Body of pancreas (tissue), 4 donors: ENCODE measurements at regions of chr14 and their contacts with region 1.

Region 1: GRCh38 chr14:93115069-93115820 is 480 bp downstream of the ITPK1 start:
- DNase-seq: peak; percentile 88 to 91 (median 90)
- ATAC-seq: peak; percentile 88
- H3K4me3 ChIP-seq: peak overlapping the region; percentile 64 to 76
- H3K27ac ChIP-seq: peak overlapping the region; percentile 92 to 97 (median 94)
- H3K4me1 ChIP-seq: peaks cover 27% of the 10 kb centered on the region
- H3K27me3 ChIP-seq: no peaks in the 10 kb centered on the region
- CTCF ChIP-seq: peak in 3 of 7 experiments; percentile 13 to 27 (median 25)
- POLR2A ChIP-seq: peak; percentile 46 to 69 (median 65)

Region 2: GRCh38 chr14:92973261-92973797 is 141.9 kb before region 1 on chr14:
- intact Hi-C with region 1: no loop called
- DNase-seq: peak; percentile 60 to 67 (median 64)
- ATAC-seq: peak; percentile 67
- H3K4me3 ChIP-seq: no peak overlapping the region
- H3K27ac ChIP-seq: no peak overlapping the region
- H3K4me1 ChIP-seq: peaks cover 6% of the 10 kb centered on the region
- H3K27me3 ChIP-seq: no peaks in the 10 kb centered on the region
- CTCF ChIP-seq: peak in 6 of 7 experiments; percentile 36 to 65 (median 56)
- POLR2A ChIP-seq: no peak

Region 3: GRCh38 chr14:93173943-93174395 is 58.7 kb after region 1 on chr14:
- intact Hi-C with region 1: loop called (anchors 10 kb)
- DNase-seq: peak in 2 of 4 donors; percentile 20 to 26
- ATAC-seq: no peak
- H3K4me3 ChIP-seq: no peak overlapping the region
- H3K27ac ChIP-seq: peak overlapping the region in 1 of 4 donors; percentile 17
- H3K4me1 ChIP-seq: peaks cover 7% of the 10 kb centered on the region
- H3K27me3 ChIP-seq: no peaks in the 10 kb centered on the region
- CTCF ChIP-seq: no peak
- POLR2A ChIP-seq: no peak